Dorsolateral prefrontal cortex (tissue), 120 donors: ENCODE measurements at regions of chr7 and their contacts with region 1.

Region 1: GRCh38 chr7:140924019-140924820 is 509 bp downstream of the BRAF start:
- DNase-seq: peak; percentile 54 to 84 (median 74)
- H3K4me3 ChIP-seq: peak overlapping the region; percentile 62 to 99 (median 92)
- H3K27ac ChIP-seq: peak overlapping the region; percentile 92 to 100 (median 99)
- H3K27me3 ChIP-seq: no peaks in the 10 kb centered on the region
- CTCF ChIP-seq: peak in 55 of 56 donors; percentile 14 to 79 (median 56)

Region 2: GRCh38 chr7:140479062-140479738 is 445.0 kb before region 1 on chr7 and contains the start of gene MKRN1:
- intact Hi-C with region 1: loop called in 1 of 2 experiments (anchors 10 kb)
- DNase-seq: peak; percentile 87 to 98 (median 96)
- H3K4me3 ChIP-seq: peak within 1 kb of the TSS; percentile 66 to 100 (median 94)
- H3K27ac ChIP-seq: peak within 1 kb of the TSS; percentile 17 to 95 (median 86)
- H3K27me3 ChIP-seq: no peaks in the 10 kb centered on the region
- CTCF ChIP-seq: peak in 23 of 56 donors; percentile 0 to 55 (median 23)
- total RNA-seq, gene MKRN1: 64.7 to 117 (median 91.9) TPM

Region 3: GRCh38 chr7:140609646-140610045 is 314.6 kb before region 1 on chr7:
- intact Hi-C with region 1: no loop called
- DNase-seq: no peak
- H3K4me3 ChIP-seq: no peak overlapping the region
- H3K27ac ChIP-seq: no peak overlapping the region
- H3K27me3 ChIP-seq: no peaks in the 10 kb centered on the region
- CTCF ChIP-seq: no peak

Region 4: GRCh38 chr7:140673063-140673773 is 251.0 kb before region 1 on chr7:
- intact Hi-C with region 1: loop called (anchors 10 kb)
- DNase-seq: peak in 5 of 10 donors; percentile 26 to 74 (median 45)
- H3K4me3 ChIP-seq: peak overlapping the region; percentile 58 to 98 (median 83)
- H3K27ac ChIP-seq: peak overlapping the region; percentile 46 to 97 (median 90)
- H3K27me3 ChIP-seq: no peaks in the 10 kb centered on the region
- CTCF ChIP-seq: peak in 5 of 56 donors; percentile 6 to 25 (median 7)

Region 5: GRCh38 chr7:140696680-140697446 is 227.4 kb before region 1 on chr7 and contains the start of gene NDUFB2:
- intact Hi-C with region 1: loop called in 1 of 2 experiments (anchors 5 kb)
- DNase-seq: peak; percentile 73 to 96 (median 84)
- H3K4me3 ChIP-seq: peak within 1 kb of the TSS; percentile 59 to 97 (median 86)
- H3K27ac ChIP-seq: peak within 1 kb of the TSS; percentile 72 to 100 (median 97)
- H3K27me3 ChIP-seq: no peaks in the 10 kb centered on the region
- CTCF ChIP-seq: peak in 26 of 56 donors; percentile 3 to 43 (median 17)
- total RNA-seq, gene NDUFB2: 147 to 282 (median 221) TPM

Region 6: GRCh38 chr7:140810830-140811556 is 113.2 kb before region 1 on chr7:
- intact Hi-C with region 1: loop called in 1 of 2 experiments (anchors 10 kb)
- DNase-seq: peak in 4 of 10 donors; percentile 47 to 69 (median 58)
- H3K4me3 ChIP-seq: no peak overlapping the region
- H3K27ac ChIP-seq: no peak overlapping the region
- H3K27me3 ChIP-seq: no peaks in the 10 kb centered on the region
- CTCF ChIP-seq: peak; percentile 54 to 87 (median 80)

Region 7: GRCh38 chr7:141685285-141686023 is 761.2 kb after region 1 on chr7:
- intact Hi-C with region 1: loop called in 1 of 2 experiments (anchors 10 kb)
- DNase-seq: peak; percentile 51 to 94 (median 78)
- H3K4me3 ChIP-seq: peak overlapping the region in 20 of 59 donors; percentile 3 to 45 (median 21)
- H3K27ac ChIP-seq: peak overlapping the region; percentile 44 to 93 (median 84)
- H3K27me3 ChIP-seq: no peaks in the 10 kb centered on the region
- CTCF ChIP-seq: peak in 1 of 56 donors; percentile 13